ENCODE measurements at regions of chr13 and their contacts with region 1.

Region 1: GRCh38 chr13:99606324-99607066 is 105.2 kb downstream of the TM9SF2 start:
- DNase-seq: peak; percentile 76 to 98 (median 88)

Region 2: DNA sequence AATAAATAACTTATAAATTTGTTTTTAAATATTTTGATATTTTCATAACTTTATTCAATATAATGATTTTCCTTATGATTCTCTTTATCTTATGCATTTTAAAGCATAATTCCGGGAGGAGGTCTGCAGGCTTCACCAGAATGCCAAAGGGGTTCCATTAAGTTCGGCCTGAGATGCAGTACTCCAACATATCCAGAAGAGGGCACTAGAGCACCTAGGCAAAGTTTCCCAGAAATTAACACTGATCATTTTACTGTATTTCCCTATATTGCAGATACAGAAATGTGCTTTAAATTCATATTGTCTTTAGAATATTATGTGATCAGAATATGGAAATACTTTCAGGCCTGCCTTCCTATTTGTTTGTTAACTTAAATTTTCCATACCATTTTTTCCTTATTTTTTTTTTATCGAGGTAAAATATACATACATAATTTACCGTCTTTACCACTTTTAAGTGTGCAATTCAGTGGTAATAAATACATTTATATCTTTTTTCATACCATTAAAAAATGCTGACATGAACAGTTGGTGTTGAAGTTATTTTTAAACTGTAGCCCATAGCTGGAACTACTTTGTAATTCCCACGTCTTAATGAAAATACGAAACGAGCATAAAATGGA is 164.1 kb before region 1 on chr13:
- intact Hi-C with region 1: loop called (anchors 10 kb)
- DNase-seq: peak in 4 of 10 donors; percentile 26 to 41 (median 32)

Region 3: GRCh38 chr13:99501184-99501847 is 105.2 kb before region 1 on chr13 and contains the start of gene TM9SF2:
- intact Hi-C with region 1: loop called (anchors 2 kb)
- DNase-seq: peak; percentile 90 to 99 (median 94)

Region 4: GRCh38 chr13:99740251-99740979 is 133.9 kb after region 1 on chr13:
- intact Hi-C with region 1: no loop called
- DNase-seq: peak in 1 of 10 donors; percentile 15

Measured in posterior cingulate gyrus (tissue), 11 donors.